Calu3 (cell line): ENCODE measurements at regions of chr11 and their contacts with region 1.

Region 1: GRCh38 chr11:47152953-47153950 is 23.4 kb downstream of the ARFGAP2 start:
- DNase-seq: peak; percentile 86
- H3K4me3 Mint-ChIP-seq: no peak overlapping the region
- H3K27ac Mint-ChIP-seq: peak overlapping the region; percentile 16
- H3K4me1 Mint-ChIP-seq: no peaks in the 10 kb centered on the region
- H3K27me3 Mint-ChIP-seq: no peaks in the 10 kb centered on the region
- CTCF ChIP-seq: peak; percentile 95

Region 2: DNA sequence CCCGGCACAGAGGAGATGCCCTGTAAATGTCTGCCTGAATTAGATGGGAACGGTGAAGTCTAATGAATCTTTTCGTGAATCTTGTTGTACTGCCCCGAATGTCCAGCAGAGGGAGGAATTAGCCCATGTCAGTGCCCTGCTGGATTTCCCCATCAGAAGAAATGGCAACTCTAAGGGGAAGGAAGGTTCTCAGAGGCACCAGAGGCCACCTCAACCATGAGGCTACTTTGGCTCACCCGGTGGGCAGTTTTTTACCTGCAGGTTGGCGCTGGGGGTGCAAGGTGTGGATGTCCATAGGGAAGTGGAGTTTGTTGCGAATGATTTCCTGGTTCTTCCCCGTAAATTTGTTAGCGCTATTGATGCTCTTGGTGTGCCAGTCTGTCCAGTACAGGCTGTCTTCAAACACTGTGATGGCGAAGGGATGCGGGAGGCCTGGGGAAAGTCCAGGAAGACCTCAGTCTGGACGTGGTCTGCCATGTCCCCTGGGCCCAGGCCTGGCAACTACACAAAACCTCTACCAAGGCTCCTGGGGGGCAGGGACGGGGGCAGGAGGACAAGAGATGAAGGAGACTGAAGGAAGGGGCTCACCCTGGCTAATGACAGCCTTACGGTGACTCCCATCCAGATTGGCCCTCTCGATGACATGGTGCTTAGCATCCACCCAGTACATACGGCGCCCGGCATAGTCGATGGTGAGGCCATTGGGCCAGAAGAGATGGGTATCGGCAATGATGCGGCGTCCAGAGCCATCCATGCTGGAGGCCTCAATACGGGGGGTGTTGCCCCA is 263.4 kb before region 1 on chr11:
- CTCF ChIA-PET with region 1: interaction called, 9 read pairs
- intact Hi-C with region 1: loop called (anchors 1 kb)
- DNase-seq: peak; percentile 74
- H3K4me3 Mint-ChIP-seq: no peak overlapping the region
- H3K27ac Mint-ChIP-seq: no peak overlapping the region
- H3K4me1 Mint-ChIP-seq: no peaks in the 10 kb centered on the region
- H3K27me3 Mint-ChIP-seq: peaks cover 14% of the 10 kb centered on the region
- CTCF ChIP-seq: peak; percentile 74

Region 3: GRCh38 chr11:47191865-47192521 is 38.7 kb after region 1 on chr11:
- CTCF ChIA-PET with region 1: interaction called, 6 read pairs
- intact Hi-C with region 1: loop called (anchors 2 kb)
- DNase-seq: no peak
- H3K4me3 Mint-ChIP-seq: no peak overlapping the region
- H3K27ac Mint-ChIP-seq: no peak overlapping the region
- H3K4me1 Mint-ChIP-seq: peaks cover 22% of the 10 kb centered on the region
- H3K27me3 Mint-ChIP-seq: no peaks in the 10 kb centered on the region
- CTCF ChIP-seq: no peak